HEK293 (cell line): ENCODE measurements at regions of chr6 and their contacts with region 1.

Region 1: GRCh38 chr6:102853269-102853955 is 1459.9 kb downstream of the GRIK2 start:
- H3K4me3 ChIP-seq: no peak overlapping the region
- H3K27ac ChIP-seq: no peak overlapping the region
- H3K4me1 ChIP-seq: no peaks in the 10 kb centered on the region
- CTCF ChIP-seq: no peak

Region 2: DNA sequence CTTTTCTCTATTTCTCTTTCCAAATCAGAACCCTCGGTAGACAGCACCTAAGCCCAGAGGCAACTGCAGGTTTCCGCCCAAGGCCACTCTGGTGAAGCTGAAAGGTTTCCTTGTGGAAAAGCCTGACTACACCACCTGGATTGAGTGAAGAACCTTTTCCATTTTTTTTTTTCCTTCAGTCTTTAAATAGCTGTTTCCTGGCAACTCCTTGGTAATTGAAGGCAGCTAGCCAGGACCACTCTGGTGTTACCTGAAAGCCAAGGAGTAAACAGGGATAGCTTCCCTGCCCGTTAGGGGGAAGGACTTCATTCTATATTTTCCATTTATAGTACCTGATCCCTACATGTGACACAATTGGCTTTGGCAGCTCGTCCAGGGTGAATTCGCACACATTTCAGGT is 221.5 kb before region 1 on chr6:
- CTCF ChIA-PET with region 1: no interaction called
- POLR2A ChIA-PET with region 1: no interaction called
- H3K4me3 ChIP-seq: no peak overlapping the region
- H3K27ac ChIP-seq: no peak overlapping the region
- H3K4me1 ChIP-seq: no peaks in the 10 kb centered on the region
- CTCF ChIP-seq: no peak

Region 3: GRCh38 chr6:102986086-102986485 is 132.7 kb after region 1 on chr6:
- CTCF ChIA-PET with region 1: no interaction called
- POLR2A ChIA-PET with region 1: no interaction called
- H3K4me3 ChIP-seq: no peak overlapping the region
- H3K27ac ChIP-seq: no peak overlapping the region
- H3K4me1 ChIP-seq: no peaks in the 10 kb centered on the region
- CTCF ChIP-seq: no peak

Region 4: DNA sequence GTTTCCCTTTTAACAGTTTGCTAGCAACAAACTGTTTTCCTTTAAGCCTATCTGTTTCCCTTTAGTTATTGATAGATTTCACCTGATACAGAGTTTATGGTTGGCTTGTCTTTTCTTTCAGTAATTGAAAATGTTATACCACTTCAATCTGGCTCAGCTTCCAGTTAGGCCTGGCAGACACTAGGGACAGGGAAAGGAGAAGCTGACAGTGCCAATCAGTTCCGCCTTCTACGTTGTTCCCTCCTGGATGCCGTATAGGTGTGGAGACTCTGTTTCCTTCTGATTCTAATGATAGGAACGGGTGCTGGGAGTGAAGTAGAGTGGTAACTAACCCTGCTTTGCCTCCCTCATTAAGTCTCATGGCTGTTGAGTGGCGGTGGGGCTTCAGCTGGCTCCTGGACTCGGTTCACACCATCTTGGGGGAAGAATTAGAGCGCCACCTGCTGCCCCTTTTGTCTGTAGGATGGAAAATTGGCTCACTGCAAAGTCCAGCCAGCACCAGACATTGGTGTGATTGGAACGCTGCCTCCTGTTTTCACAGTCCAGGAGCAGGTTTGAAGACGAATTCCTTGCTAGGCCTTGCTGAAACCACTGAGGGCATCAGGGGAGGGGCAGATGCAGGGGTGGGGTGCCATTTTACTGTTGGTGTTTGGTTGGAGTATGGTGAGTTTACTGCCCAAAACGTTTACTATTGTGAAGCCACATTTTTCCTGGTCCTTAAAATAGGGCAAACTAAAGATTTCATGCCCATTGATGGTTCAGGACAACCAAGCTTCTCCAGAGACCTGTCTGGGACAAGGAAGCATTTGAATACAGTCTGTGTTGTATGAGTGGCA is 269.6 kb after region 1 on chr6:
- CTCF ChIA-PET with region 1: interaction called, 36 read pairs
- POLR2A ChIA-PET with region 1: no interaction called
- H3K4me3 ChIP-seq: no peak overlapping the region
- H3K27ac ChIP-seq: no peak overlapping the region
- H3K4me1 ChIP-seq: no peaks in the 10 kb centered on the region
- CTCF ChIP-seq: no peak